ENCODE measurements at regions of chr14 and their contacts with region 1.

Region 1: DNA sequence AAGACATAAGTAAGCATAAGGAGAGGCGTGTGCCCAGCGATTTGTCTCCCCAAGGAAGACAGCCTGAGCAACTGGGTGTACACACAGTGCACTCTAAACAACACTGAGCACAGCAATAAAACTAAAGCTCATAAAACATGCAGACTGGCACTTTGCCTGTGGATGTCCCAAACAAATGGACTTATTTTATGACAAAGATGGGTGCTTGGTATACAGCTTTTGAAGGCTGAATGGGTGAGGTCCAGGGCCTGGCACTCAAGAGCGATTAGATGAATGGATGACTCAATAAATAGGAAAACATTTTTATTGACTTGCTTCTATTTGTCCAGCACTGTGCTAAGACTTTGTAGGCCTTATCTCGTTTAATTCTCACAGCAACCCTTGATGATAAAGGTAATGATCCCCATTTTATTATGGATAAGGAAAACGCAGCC is 28.5 kb downstream of the LGMN start:
- DNase-seq: no peak
- ATAC-seq: no peak
- H3K4me3 ChIP-seq: no peak overlapping the region
- H3K4me3 Mint-ChIP-seq: no peak overlapping the region
- H3K27ac ChIP-seq: no peak overlapping the region
- H3K27ac Mint-ChIP-seq: peak overlapping the region in 1 of 2 donors; percentile 68
- H3K4me1 ChIP-seq: peaks cover 22% of the 10 kb centered on the region
- H3K4me1 Mint-ChIP-seq: peaks cover 14% of the 10 kb centered on the region in 2 donors
- H3K27me3 ChIP-seq: no peaks in the 10 kb centered on the region
- H3K27me3 Mint-ChIP-seq: peaks cover 0 to 2% of the 10 kb centered on the region in 2 donors
- CTCF ChIP-seq: no peak

Region 2: GRCh38 chr14:92612988-92613658 is 106.8 kb before region 1 on chr14:
- intact Hi-C with region 1: no loop called
- DNase-seq: peak; percentile 48 to 84
- ATAC-seq: peak in 1 of 3 donors; percentile 21
- H3K4me3 ChIP-seq: no peak overlapping the region
- H3K4me3 Mint-ChIP-seq: peak overlapping the region; percentile 47
- H3K27ac ChIP-seq: peak overlapping the region; percentile 99
- H3K27ac Mint-ChIP-seq: peak overlapping the region; percentile 97 to 100
- H3K4me1 ChIP-seq: peaks cover 76% of the 10 kb centered on the region
- H3K4me1 Mint-ChIP-seq: peaks cover 84 to 87% of the 10 kb centered on the region in 2 donors
- H3K27me3 ChIP-seq: no peaks in the 10 kb centered on the region
- H3K27me3 Mint-ChIP-seq: no peaks in the 10 kb centered on the region
- CTCF ChIP-seq: peak; percentile 71

Region 3: GRCh38 chr14:92750994-92751400 is 31.1 kb after region 1 on chr14:
- intact Hi-C with region 1: loop called (anchors 2 kb)
- DNase-seq: peak in 1 of 2 donors; percentile 15
- ATAC-seq: no peak
- H3K4me3 ChIP-seq: peak overlapping the region; percentile 19
- H3K4me3 Mint-ChIP-seq: peak overlapping the region; percentile 79
- H3K27ac ChIP-seq: no peak overlapping the region
- H3K27ac Mint-ChIP-seq: no peak overlapping the region
- H3K4me1 ChIP-seq: peaks cover 29% of the 10 kb centered on the region
- H3K4me1 Mint-ChIP-seq: peaks cover 34 to 48% of the 10 kb centered on the region in 2 donors
- H3K27me3 ChIP-seq: peaks cover 36% of the 10 kb centered on the region
- H3K27me3 Mint-ChIP-seq: peaks cover 74 to 83% of the 10 kb centered on the region in 2 donors
- CTCF ChIP-seq: no peak

Region 4: GRCh38 chr14:92768795-92769194 is 48.9 kb after region 1 on chr14:
- intact Hi-C with region 1: no loop called
- DNase-seq: no peak
- ATAC-seq: no peak
- H3K4me3 ChIP-seq: no peak overlapping the region
- H3K4me3 Mint-ChIP-seq: no peak overlapping the region
- H3K27ac ChIP-seq: peak overlapping the region; percentile 39
- H3K27ac Mint-ChIP-seq: no peak overlapping the region
- H3K4me1 ChIP-seq: peaks cover 13% of the 10 kb centered on the region
- H3K4me1 Mint-ChIP-seq: no peaks in the 10 kb centered on the region
- H3K27me3 ChIP-seq: no peaks in the 10 kb centered on the region
- H3K27me3 Mint-ChIP-seq: peaks cover 0 to 4% of the 10 kb centered on the region in 2 donors
- CTCF ChIP-seq: no peak

Region 5: DNA sequence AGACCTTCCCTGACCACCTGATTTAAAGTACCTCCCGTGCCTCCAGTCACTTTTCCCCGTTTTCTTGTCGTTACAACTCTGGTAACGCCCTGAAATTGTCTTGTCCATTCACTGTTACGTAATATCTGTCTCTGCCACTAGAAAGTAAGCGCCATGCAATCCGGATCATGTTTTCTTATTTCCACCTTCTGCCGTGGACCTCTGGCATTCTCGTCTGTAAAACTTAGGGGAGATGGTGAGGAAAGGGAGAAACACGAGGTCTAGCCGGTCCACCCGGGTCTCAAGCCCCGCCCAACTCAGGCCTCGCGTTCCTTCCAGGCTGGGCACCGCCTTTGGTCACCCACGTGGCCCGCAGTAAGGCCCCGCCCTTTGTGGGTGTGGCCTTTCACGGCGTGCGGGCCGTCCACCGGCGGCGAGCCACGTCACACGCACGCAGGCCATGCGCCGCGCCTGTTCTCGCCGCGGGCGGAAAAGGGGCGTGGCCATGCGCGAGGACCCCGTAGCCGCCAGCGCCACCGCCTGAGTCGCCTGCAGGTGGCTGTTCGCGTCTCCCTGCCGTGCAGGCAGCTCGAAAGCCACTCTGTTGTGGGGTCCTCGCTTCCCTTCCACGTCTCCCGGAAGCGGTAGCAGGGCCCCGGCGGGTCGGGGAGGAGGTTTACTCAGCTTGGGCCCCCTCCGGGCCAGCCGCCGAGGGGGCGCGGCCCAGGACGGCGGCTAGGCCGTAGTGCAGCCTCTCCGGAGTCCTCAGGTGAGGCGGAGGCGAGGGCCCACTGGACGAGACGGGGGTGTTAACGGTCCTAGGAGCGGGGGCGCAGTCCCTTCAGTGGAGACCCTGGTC is 74.0 kb after region 1 on chr14 and contains the start of gene GOLGA5:
- intact Hi-C with region 1: loop called (anchors 2 kb)
- DNase-seq: peak; percentile 99
- ATAC-seq: peak; percentile 89 to 98 (median 92)
- H3K4me3 ChIP-seq: peak within 1 kb of the TSS; percentile 99
- H3K4me3 Mint-ChIP-seq: peak within 1 kb of the TSS; percentile 95
- H3K27ac ChIP-seq: peak within 1 kb of the TSS; percentile 86
- H3K27ac Mint-ChIP-seq: peak within 1 kb of the TSS; percentile 77 to 85
- H3K4me1 ChIP-seq: peaks cover 14% of the 10 kb centered on the region
- H3K4me1 Mint-ChIP-seq: peaks cover 32 to 38% of the 10 kb centered on the region in 2 donors
- H3K27me3 ChIP-seq: no peaks in the 10 kb centered on the region
- H3K27me3 Mint-ChIP-seq: peaks cover 3 to 27% of the 10 kb centered on the region in 2 donors
- CTCF ChIP-seq: no peak
- total RNA-seq, gene GOLGA5: 11.5 to 21.0 (median 17.1) TPM